ENCODE measurements at regions of chr6 and their contacts with region 1.

Region 1: GRCh38 chr6:148947621-148948444 is 201.0 kb downstream of the UST start:
- DNase-seq: peak; percentile 77
- H3K4me3 ChIP-seq: no peak overlapping the region
- H3K27ac ChIP-seq: no peak overlapping the region
- H3K4me1 ChIP-seq: no peaks in the 10 kb centered on the region
- H3K27me3 ChIP-seq: no peaks in the 10 kb centered on the region
- CTCF ChIP-seq: peak; percentile 85 to 90
- POLR2A ChIP-seq: no peak

Region 2: GRCh38 chr6:148559848-148560433 is 387.9 kb before region 1 on chr6:
- CTCF ChIA-PET with region 1: interaction called, 14 read pairs
- POLR2A ChIA-PET with region 1: no interaction called
- dilution Hi-C with region 1: no loop called
- intact Hi-C with region 1: loop called (anchors 1 kb)
- DNase-seq: peak; percentile 64
- H3K4me3 ChIP-seq: peak overlapping the region in 2 of 3 experiments; percentile 36 to 41
- H3K27ac ChIP-seq: no peak overlapping the region
- H3K4me1 ChIP-seq: no peaks in the 10 kb centered on the region
- H3K27me3 ChIP-seq: no peaks in the 10 kb centered on the region
- CTCF ChIP-seq: peak; percentile 96 to 99
- POLR2A ChIP-seq: no peak

Region 3: GRCh38 chr6:148746363-148747144 is 201.3 kb before region 1 on chr6 and contains the start of gene UST:
- CTCF ChIA-PET with region 1: no interaction called
- POLR2A ChIA-PET with region 1: no interaction called
- dilution Hi-C with region 1: no loop called
- intact Hi-C with region 1: loop called (anchors 1 kb)
- DNase-seq: peak; percentile 60
- H3K4me3 ChIP-seq: peak within 1 kb of the TSS; percentile 20 to 65 (median 54)
- H3K27ac ChIP-seq: no peak within 1 kb of the TSS
- H3K4me1 ChIP-seq: peaks cover 7% of the 10 kb centered on the region
- H3K27me3 ChIP-seq: peaks cover 36 to 44% of the 10 kb centered on the region in 2 experiments
- CTCF ChIP-seq: peak in 1 of 2 donors; percentile 24
- POLR2A ChIP-seq: no peak
- total RNA-seq, gene UST: 0.81 and 0.84 TPM in 2 replicates

Region 4: GRCh38 chr6:148831064-148831463 is 116.8 kb before region 1 on chr6:
- CTCF ChIA-PET with region 1: no interaction called
- POLR2A ChIA-PET with region 1: no interaction called
- dilution Hi-C with region 1: no loop called
- intact Hi-C with region 1: loop called (anchors 5 kb)
- DNase-seq: no peak
- H3K4me3 ChIP-seq: no peak overlapping the region
- H3K27ac ChIP-seq: no peak overlapping the region
- H3K4me1 ChIP-seq: no peaks in the 10 kb centered on the region
- H3K27me3 ChIP-seq: no peaks in the 10 kb centered on the region
- CTCF ChIP-seq: no peak
- POLR2A ChIP-seq: no peak

Region 5: GRCh38 chr6:149012040-149012545 is 64.3 kb after region 1 on chr6:
- CTCF ChIA-PET with region 1: no interaction called
- POLR2A ChIA-PET with region 1: no interaction called
- dilution Hi-C with region 1: no loop called
- intact Hi-C with region 1: no loop called
- DNase-seq: peak; percentile 11
- H3K4me3 ChIP-seq: no peak overlapping the region
- H3K27ac ChIP-seq: no peak overlapping the region
- H3K4me1 ChIP-seq: no peaks in the 10 kb centered on the region
- H3K27me3 ChIP-seq: no peaks in the 10 kb centered on the region
- CTCF ChIP-seq: no peak
- POLR2A ChIP-seq: no peak

Measured in endothelial cell of umbilical vein (primary cell).